ENCODE measurements at regions of chr16 and their contacts with region 1.

Region 1: GRCh38 chr16:9099131-9099625 is 7.7 kb downstream of the HAPSTR1 start:
- DNase-seq: peak; percentile 59
- ATAC-seq: peak; percentile 73
- H3K4me3 Mint-ChIP-seq: peak overlapping the region; percentile 52
- H3K27ac Mint-ChIP-seq: peak overlapping the region; percentile 83
- H3K4me1 Mint-ChIP-seq: peaks cover 88% of the 10 kb centered on the region
- H3K27me3 Mint-ChIP-seq: no peaks in the 10 kb centered on the region

Region 2: GRCh38 chr16:9112166-9112843 is 13.1 kb after region 1 on chr16:
- CTCF ChIA-PET with region 1: interaction called, 20 read pairs
- POLR2A ChIA-PET with region 1: interaction called, 10 read pairs
- intact Hi-C with region 1: loop called in 1 of 2 experiments (anchors 1 kb)
- DNase-seq: no peak
- ATAC-seq: no peak
- H3K4me3 Mint-ChIP-seq: no peak overlapping the region
- H3K27ac Mint-ChIP-seq: peak overlapping the region; percentile 51
- H3K4me1 Mint-ChIP-seq: peaks cover 93% of the 10 kb centered on the region
- H3K27me3 Mint-ChIP-seq: no peaks in the 10 kb centered on the region

Region 3: GRCh38 chr16:9124908-9125584 is 25.9 kb after region 1 on chr16:
- CTCF ChIA-PET with region 1: interaction called, 6 read pairs
- POLR2A ChIA-PET with region 1: interaction called, 14 read pairs
- intact Hi-C with region 1: loop called (anchors 2 to 5 kb)
- DNase-seq: no peak
- ATAC-seq: no peak
- H3K4me3 Mint-ChIP-seq: no peak overlapping the region
- H3K27ac Mint-ChIP-seq: peak overlapping the region; percentile 55
- H3K4me1 Mint-ChIP-seq: peaks cover 66% of the 10 kb centered on the region
- H3K27me3 Mint-ChIP-seq: no peaks in the 10 kb centered on the region